AG04450 (cell line): ENCODE measurements at regions of chr5 and their contacts with region 1.

Region 1: GRCh38 chr5:173972925-173973615 is 15.9 kb upstream of the C5orf47 start:
- DNase-seq: peak; percentile 73
- H3K4me3 ChIP-seq: peak overlapping the region; percentile 58
- H3K27ac ChIP-seq: no peak overlapping the region
- H3K27me3 ChIP-seq: peaks cover 5% of the 10 kb centered on the region
- CTCF ChIP-seq: peak; percentile 82

Region 2: DNA sequence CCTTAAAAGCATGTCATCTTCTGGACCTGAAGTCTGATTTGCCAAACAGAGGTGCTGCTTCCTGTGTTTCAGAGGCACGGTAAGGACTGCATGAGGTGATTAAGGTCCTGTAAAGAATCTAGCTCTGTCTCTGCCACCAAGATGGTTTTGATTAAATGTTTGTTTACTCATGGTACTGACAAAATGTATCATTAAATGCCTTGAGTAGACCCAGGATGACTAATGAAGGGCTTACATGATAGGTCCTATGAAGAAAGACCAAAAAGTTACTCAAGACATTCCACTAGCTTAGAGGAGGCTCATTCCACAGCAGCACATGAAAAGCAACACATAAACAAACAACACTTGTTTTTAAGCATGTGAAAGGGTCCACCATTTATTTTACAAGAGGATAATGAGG is 457.6 kb before region 1 on chr5:
- CTCF ChIA-PET with region 1: no interaction called
- POLR2A ChIA-PET with region 1: no interaction called
- DNase-seq: peak; percentile 50
- H3K4me3 ChIP-seq: no peak overlapping the region
- H3K27ac ChIP-seq: no peak overlapping the region
- H3K27me3 ChIP-seq: no peaks in the 10 kb centered on the region
- CTCF ChIP-seq: no peak

Region 3: GRCh38 chr5:173903396-173904140 is 69.5 kb before region 1 on chr5:
- CTCF ChIA-PET with region 1: interaction called, 10 read pairs
- POLR2A ChIA-PET with region 1: no interaction called
- DNase-seq: no peak
- H3K4me3 ChIP-seq: no peak overlapping the region
- H3K27ac ChIP-seq: no peak overlapping the region
- H3K27me3 ChIP-seq: no peaks in the 10 kb centered on the region
- CTCF ChIP-seq: no peak

Region 4: GRCh38 chr5:173941758-173942401 is 31.2 kb before region 1 on chr5:
- CTCF ChIA-PET with region 1: interaction called, 11 read pairs
- POLR2A ChIA-PET with region 1: interaction called, 7 read pairs
- DNase-seq: no peak
- H3K4me3 ChIP-seq: no peak overlapping the region
- H3K27ac ChIP-seq: no peak overlapping the region
- H3K27me3 ChIP-seq: no peaks in the 10 kb centered on the region
- CTCF ChIP-seq: no peak

Region 5: DNA sequence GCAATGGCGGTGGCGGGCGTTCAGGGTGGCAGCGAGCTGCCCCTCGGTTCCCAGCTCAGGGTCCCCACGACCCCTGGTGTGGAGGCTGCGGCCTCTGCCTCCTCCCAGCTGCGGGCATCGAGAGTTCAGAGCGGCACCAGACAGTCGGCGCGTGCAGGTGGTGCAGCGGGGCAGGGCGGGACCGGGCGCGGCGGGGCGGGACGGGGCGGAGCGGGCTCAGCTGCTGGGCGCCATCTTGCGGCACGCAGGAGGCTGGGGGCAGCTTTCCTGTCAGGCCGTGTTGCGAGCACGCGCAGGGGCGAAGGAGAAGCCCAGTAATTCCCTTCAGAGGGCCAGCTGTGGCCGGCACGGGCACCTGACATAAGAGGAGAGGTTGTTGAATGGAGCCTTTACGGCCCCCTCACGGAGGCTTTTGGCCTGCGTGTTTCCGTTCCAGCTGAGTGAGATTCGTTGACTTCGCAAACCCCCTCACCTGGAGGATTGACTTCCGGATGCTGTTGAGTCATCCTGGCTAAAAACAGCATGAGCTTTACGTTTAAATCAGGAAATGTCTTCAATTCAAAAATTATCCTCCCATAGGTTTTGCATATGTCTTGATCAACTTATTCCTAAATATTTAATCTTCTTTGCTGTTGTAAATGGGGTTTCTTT is 16.5 kb after region 1 on chr5:
- CTCF ChIA-PET with region 1: interaction called, 16 read pairs
- POLR2A ChIA-PET with region 1: no interaction called
- DNase-seq: no peak
- H3K4me3 ChIP-seq: no peak overlapping the region
- H3K27ac ChIP-seq: no peak overlapping the region
- H3K27me3 ChIP-seq: peaks cover 4% of the 10 kb centered on the region
- CTCF ChIP-seq: no peak

Region 6: DNA sequence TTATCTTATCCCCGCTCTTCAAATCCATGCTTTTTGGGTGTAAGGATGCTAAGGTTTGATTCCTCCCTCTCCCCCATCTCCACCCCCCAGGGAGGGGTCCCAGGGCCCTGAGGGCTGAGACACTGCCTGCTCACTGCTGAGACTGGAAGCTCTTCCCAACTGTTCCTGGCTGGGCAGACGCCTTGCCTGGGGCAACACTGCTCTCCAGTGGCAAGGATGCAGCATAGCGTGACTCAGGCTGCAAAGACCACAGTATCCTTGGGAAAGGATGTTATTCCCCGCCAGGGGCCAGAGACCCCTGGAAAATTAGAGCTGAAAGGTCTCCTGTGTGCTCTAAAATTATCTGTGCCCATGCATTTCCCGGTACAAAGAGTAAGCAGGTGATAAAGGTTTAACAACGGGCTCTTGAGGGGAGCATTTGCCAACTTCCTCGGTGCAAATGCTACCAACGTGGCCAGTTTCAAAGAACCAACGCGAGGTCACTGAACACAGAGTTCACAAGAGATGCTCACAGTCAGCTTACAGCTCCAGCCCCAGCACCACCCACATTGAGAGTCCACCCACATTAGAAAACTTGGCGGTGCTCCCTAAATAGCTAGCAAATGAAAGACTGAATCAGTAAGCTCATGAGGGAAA is 344.3 kb after region 1 on chr5:
- CTCF ChIA-PET with region 1: interaction called, 13 read pairs
- POLR2A ChIA-PET with region 1: no interaction called
- DNase-seq: no peak
- H3K4me3 ChIP-seq: no peak overlapping the region
- H3K27ac ChIP-seq: no peak overlapping the region
- H3K27me3 ChIP-seq: peaks cover 12% of the 10 kb centered on the region
- CTCF ChIP-seq: peak; percentile 95

Region 7: DNA sequence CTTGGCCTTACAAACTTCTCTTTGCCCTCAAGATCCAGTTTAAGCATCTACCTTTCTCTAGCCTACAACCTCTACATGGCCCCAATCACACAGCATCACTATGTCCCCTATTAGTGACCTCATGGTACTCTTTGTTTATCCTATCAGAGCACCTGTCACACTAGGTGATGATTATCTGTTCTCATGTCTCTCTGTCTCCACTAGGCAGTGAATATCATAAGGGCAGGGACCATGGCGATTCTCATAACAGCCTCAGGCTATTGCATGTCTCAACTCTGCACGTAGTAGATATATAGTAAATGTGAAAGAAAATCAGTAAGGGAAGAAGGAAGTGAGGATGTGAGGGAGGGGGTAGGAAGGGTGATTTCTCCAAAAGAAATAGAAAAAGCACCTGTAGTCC is 383.4 kb after region 1 on chr5:
- CTCF ChIA-PET with region 1: no interaction called
- POLR2A ChIA-PET with region 1: no interaction called
- DNase-seq: no peak
- H3K4me3 ChIP-seq: no peak overlapping the region
- H3K27ac ChIP-seq: no peak overlapping the region
- H3K27me3 ChIP-seq: no peaks in the 10 kb centered on the region
- CTCF ChIP-seq: no peak